Calu3 (cell line): ENCODE measurements at regions of chr4 and their contacts with region 1.

Region 1: GRCh38 chr4:123990318-123990870 is 593.8 kb downstream of the SPRY1 start:
- DNase-seq: no peak
- H3K4me3 Mint-ChIP-seq: no peak overlapping the region
- H3K27ac Mint-ChIP-seq: no peak overlapping the region
- H3K4me1 Mint-ChIP-seq: no peaks in the 10 kb centered on the region
- H3K27me3 Mint-ChIP-seq: no peaks in the 10 kb centered on the region
- CTCF ChIP-seq: no peak

Region 2: GRCh38 chr4:123776254-123776653 is 214.1 kb before region 1 on chr4:
- CTCF ChIA-PET with region 1: no interaction called
- intact Hi-C with region 1: loop called (anchors 2 kb)
- DNase-seq: no peak
- H3K4me3 Mint-ChIP-seq: no peak overlapping the region
- H3K27ac Mint-ChIP-seq: no peak overlapping the region
- H3K4me1 Mint-ChIP-seq: peaks cover 6% of the 10 kb centered on the region
- H3K27me3 Mint-ChIP-seq: no peaks in the 10 kb centered on the region
- CTCF ChIP-seq: no peak